ENCODE measurements at regions of chr15 and their contacts with region 1.

Region 1: DNA sequence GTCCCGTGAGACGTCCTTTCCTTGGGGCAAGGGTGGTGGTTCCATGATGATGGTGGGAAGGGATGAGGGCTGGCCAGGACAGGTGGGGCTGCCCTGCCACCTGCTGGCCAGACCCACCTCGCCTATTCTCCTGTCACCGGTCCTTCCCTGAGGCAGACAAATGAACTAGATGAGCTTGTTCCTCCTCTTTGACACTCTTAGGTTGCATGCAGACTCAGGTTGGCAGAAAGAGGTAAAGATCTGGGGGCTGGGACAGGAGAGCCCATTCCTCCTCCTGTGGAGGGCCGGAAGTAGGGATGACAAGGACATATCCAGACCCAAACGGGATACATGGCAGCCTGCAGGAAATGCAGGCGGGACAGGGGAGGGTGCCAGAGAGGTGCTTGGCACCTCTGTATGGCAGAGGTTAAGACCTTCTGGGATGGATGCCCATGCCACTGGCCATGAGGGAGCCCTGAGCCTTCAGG is 38.6 kb downstream of the ACSBG1 start:
- DNase-seq: peak in 32 of 35 experiments; percentile 8 to 72 (median 33)
- ATAC-seq: peak; percentile 60 to 89 (median 80)
- H3K4me3 ChIP-seq: no peak overlapping the region
- H3K4me3 Mint-ChIP-seq: no peak overlapping the region
- H3K27ac ChIP-seq: no peak overlapping the region
- H3K27ac Mint-ChIP-seq: no peak overlapping the region
- H3K4me1 ChIP-seq: peaks cover 0 to 4% of the 10 kb centered on the region in 2 experiments
- H3K4me1 Mint-ChIP-seq: peaks cover 0 to 4% (median 0%) of the 10 kb centered on the region in 3 donors
- H3K27me3 ChIP-seq: no peaks in the 10 kb centered on the region
- H3K27me3 Mint-ChIP-seq: no peaks in the 10 kb centered on the region

Region 2: GRCh38 chr15:78131295-78132061 is 64.3 kb before region 1 on chr15 and contains the start of gene CIB2:
- CTCF ChIA-PET with region 1: interaction called, 4 to 15 read pairs
- POLR2A ChIA-PET with region 1: no interaction called
- DNase-seq: peak; percentile 41 to 86 (median 67)
- ATAC-seq: peak; percentile 82 to 89 (median 86)
- H3K4me3 ChIP-seq: peak within 1 kb of the TSS; percentile 68 to 73
- H3K4me3 Mint-ChIP-seq: peak within 1 kb of the TSS; percentile 78 to 82 (median 80)
- H3K27ac ChIP-seq: peak within 1 kb of the TSS; percentile 81
- H3K27ac Mint-ChIP-seq: peak within 1 kb of the TSS; percentile 82 to 93
- H3K4me1 ChIP-seq: peaks cover 5 to 24% of the 10 kb centered on the region in 2 experiments
- H3K4me1 Mint-ChIP-seq: peaks cover 16 to 30% (median 23%) of the 10 kb centered on the region in 3 donors
- H3K27me3 ChIP-seq: no peaks in the 10 kb centered on the region
- H3K27me3 Mint-ChIP-seq: no peaks in the 10 kb centered on the region
- total RNA-seq, gene CIB2: 0.72 to 2.8 (median 2.0) TPM

Measured in T-cell (primary cell).